ENCODE measurements at regions of chr11 and their contacts with region 1.

Region 1: DNA sequence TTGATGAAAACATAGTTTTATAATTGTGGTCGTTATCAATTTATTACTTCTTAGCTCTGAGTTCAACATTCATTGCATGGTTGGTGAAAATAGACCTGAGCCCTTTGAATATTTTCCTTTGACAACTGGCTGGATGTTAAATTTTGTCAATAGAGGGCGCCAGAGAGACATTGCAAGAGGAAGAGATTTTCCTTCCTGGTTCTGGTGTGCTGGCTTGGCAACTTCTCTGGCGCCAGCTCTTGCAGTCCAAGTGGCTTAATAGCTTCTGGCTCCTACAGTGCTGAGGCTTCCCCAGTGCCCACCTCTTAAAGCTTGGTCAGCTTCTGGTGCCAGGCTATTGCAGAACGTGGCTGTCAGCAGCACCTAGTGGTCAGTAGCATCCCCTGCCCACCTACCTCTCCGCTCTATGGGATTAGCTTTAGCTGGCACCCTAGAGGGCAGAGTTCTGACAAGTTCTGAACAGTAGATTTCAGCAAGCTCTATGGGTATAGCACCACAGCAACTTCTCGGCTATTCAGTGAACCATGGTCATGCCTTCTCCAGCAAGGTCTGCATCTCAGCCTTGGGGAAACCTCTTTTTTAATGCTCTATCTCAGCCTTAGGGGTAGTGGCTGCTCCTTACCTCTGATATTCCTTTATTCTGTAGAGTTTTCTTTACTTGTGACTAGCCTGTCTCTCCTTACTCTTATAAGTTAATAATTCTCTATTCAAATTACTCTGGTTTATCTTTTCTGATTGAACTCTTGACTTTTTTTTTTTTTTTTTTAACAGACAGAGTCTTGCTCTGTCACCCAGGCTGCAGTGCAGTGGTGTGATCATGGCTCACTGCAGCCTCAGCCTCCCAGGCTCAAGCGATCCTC is 59.4 kb downstream of the ACER3 start:
- DNase-seq: peak; percentile 84
- ATAC-seq: peak; percentile 92

Region 2: DNA sequence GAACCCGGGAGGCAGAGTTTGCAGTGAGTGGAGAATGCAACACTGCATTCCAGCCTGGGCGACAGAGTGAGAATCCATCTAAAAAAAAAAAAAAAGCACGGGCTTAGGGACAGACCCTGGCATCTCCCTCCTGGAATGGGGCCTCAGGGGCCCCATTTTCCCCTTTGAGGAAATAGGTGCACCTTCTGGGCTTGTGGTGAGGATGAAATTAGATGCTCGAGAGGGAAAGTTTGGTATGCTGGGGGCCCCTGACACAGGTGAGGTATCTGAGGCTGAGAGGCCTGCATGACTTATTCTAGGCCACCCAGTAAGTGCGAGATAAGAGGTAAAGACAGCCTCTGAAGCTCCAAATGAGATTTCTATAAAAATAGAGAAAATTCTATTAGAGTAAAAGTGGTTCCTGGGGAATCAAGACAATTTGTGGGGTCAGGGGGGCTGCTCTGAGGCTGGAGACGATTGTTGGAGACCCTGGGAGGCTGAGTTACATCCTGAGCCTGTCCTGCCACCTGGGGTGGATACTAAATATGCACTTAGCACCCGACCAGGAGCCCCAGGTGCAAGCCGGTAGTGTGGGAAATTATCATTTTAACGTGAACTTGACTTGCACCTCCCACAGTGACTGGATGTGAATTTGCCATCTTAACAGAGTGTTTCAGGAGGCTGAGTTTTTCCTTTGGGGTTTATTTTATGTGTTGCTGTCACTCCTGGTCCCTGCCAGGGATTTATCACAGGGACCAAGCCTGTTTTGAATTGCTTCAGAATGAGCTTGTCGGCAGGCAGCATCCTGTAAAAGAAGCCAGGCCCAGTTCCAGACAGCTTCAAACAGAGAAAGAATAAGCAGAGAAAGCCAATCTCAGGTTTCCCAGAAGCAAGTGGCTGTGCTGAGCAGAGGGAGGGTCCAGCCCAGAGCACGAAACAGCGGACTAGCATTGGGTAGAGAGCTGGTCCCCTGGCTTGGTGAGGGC is 185.4 kb before region 1 on chr11:
- intact Hi-C with region 1: loop called (anchors 2 kb)
- DNase-seq: no peak
- ATAC-seq: no peak

Region 3: DNA sequence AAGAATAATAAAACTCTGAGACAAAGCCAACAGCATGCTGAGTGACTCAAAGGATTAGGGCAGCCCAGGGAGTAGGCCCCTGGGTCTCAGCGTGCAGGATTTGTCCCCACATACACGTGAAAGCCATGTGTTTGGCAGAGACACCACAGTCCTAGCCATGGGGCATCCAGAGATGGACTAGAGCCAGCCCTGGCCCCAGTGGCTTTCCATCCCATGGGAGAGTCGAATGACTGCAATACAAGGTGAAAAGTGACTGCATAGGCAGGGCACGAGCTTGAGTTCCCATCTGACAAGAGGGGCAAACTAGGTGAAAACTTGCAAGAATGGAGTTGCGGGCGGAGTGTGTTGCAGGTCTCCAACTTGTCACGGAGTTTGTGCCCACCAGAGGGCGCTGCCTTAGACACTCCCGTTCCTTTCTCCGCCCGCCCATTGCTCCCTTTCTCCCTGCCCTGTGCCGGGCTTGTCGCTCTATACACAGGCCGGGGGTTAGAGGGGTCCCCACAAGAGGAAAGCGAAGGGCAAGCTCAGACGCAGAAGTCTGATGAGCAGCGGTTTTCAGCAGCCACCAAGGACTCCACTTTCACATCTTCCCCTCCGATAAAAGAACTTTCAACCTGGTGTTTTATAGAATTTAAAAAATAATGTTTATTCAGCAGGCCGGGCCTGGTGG is 112.8 kb before region 1 on chr11:
- intact Hi-C with region 1: loop called (anchors 1 kb)
- DNase-seq: peak; percentile 93
- ATAC-seq: peak; percentile 82

Region 4: DNA sequence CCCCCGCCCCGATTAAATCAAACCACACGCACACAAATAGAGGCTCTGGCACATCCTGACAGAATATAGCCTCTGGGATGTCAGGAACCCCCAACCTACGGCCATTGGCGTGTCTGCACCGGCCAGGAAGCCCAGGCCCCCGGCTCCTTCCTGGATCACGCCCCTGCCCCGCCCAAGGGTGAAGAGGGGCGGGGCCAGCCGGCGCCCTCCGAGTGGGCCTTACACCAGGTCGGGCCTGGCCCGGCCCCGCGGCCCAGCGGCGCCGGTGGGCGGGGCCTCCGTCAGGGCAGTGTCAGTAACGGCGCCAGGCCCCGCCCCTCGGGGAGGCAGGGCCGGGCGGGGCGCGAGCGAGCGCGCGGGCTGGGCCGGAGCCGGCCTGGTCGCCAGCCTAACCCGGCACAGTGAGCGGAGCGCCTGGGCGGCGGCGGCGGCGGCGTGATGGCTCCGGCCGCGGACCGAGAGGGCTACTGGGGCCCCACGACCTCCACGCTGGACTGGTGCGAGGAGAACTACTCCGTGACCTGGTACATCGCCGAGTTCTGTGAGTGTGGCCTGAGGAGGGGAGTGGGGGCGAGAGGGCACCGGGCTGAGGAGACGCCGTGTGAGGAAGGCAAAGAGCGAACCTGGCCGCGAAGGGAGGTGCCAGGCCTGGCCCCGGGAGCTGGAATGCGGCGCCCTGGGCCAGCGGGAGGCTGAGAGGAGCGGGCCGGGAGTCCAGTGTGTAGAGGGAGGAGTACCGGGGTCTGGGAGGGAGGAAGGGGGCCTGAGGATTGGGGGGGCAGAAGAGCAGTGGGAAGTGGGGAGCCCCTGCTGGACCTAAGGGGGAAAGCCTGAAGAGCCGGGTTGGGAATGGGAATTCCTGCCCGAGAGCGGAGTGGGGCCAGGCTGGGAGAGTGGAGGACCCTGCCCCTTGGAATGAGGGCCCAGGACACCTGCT is 59.3 kb before region 1 on chr11 and contains the start of gene ACER3:
- intact Hi-C with region 1: loop called (anchors 5 kb)
- DNase-seq: peak; percentile 97
- ATAC-seq: peak; percentile 100
- total RNA-seq, gene ACER3: 9.9 TPM

Region 5: DNA sequence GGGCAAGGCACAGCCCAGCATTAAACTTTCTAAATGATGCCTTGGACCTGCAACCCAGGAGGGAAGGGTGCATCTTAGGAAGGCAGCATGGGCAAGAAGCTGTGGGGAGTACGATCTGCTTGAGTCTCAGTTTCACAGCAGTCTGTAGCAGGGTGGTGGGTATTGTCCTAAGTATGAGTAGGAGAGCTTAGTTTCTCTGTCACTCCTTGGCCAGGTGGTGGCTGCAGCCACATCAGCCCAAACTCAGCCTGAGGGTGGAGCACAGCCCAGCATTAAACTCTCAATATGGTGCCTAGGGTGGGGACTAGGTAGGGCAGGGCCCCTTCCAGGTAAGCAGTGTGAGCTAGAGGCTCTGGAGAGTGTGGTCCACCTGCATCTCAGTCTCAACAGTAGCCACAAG is 26.1 kb after region 1 on chr11:
- intact Hi-C with region 1: no loop called
- DNase-seq: no peak
- ATAC-seq: no peak

Region 6: GRCh38 chr11:77091146-77091940 is 171.2 kb after region 1 on chr11:
- intact Hi-C with region 1: loop called (anchors 5 kb)
- DNase-seq: no peak
- ATAC-seq: peak; percentile 77

Measured in Right ventricle myocardium inferior (tissue), 1 donor.